ENCODE measurements at regions of chr1 and their contacts with region 1.

Region 1: GRCh38 chr1:95233737-95234500 is at the start of gene RWDD3:
- DNase-seq: peak; percentile 92 to 97 (median 95)
- ATAC-seq: peak; percentile 92 to 97 (median 92)
- H3K4me3 ChIP-seq: peak within 1 kb of the TSS; percentile 90 to 97 (median 94)
- H3K27ac ChIP-seq: peak within 1 kb of the TSS; percentile 73 to 92 (median 90)
- H3K4me1 ChIP-seq: peaks cover 14 to 49% (median 30%) of the 10 kb centered on the region in 3 donors
- H3K27me3 ChIP-seq: no peaks in the 10 kb centered on the region
- CTCF ChIP-seq: peak; percentile 83 to 94 (median 91)
- total RNA-seq, gene RWDD3: 5.0 to 13.5 (median 9.8) TPM

Region 2: DNA sequence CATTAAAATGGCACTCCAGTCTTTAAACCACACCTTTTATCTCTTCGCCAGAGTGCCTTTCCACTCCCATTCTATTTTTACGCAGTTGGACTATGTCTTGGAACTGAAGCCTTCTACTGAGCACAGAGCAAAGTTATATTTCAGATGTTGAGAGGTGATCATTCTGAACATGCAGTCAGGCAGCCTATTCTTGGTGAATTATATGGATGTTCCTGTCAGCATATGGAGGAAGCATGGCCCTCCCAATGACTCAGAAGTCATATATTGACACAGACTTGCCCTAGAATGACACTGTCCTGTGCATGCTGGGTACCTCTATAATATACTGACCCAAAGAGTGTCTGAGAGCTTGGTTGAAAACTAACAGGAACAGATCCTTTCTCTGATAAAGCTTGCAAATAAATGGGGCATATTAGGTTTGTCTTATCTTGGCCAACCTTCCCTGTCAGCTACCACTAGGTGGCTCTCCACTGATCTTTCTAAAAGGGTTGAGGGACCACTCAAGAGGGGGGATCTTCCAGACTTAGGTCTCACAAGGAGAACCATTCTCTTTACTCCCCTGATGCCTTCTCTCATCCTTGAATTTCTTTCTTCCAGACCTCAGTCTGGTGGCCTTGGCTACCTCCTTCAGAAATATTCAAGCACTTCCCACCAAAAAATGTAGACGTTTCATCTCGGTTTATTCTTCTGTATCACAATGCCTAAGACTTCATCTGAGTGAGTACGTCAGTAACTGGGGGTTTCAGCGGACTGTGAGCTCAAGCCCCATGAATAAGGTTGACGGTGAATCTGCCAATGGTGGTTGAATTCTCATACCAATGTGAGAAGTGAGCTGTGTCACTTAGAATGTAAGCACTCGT is 149.4 kb before region 1 on chr1:
- intact Hi-C with region 1: loop called in 1 of 3 experiments (anchors 10 kb)
- DNase-seq: no peak
- ATAC-seq: peak; percentile 38 to 80 (median 59)
- H3K4me3 ChIP-seq: no peak overlapping the region
- H3K27ac ChIP-seq: no peak overlapping the region
- H3K4me1 ChIP-seq: peaks cover 0 to 4% (median 0%) of the 10 kb centered on the region in 3 donors
- H3K27me3 ChIP-seq: no peaks in the 10 kb centered on the region
- CTCF ChIP-seq: peak; percentile 17 to 40 (median 26)

Region 3: DNA sequence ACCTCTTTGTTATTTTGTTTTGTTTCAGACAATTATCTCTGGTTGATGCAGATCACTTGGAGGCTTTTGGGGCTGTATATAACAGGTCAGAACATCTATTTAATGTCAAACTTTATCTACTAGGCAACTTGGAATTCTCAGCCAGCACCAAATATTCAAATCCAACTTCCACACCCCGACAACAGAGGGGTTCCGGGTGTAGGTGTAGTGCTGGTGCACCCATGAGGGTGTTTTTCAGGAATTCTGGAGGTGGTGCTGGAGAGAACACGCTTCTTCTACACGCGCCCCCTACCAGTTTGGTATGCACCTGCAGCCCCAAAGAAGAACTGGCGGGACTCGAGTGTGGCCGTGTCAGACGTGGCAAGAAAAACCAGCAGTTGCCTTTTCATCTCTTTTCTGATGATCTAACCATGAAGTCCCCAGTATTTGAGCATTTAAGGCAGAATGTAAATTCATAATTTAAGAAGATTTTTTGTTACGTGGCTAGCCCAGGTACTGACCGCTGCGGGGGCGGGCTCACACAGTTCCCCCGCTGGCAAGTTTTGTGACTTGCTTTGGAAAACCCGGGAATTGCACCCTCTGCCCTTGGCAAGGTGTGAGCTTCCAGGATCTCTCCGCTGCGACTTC is 117.2 kb before region 1 on chr1:
- intact Hi-C with region 1: loop called in 2 of 3 experiments (anchors 5 to 10 kb)
- DNase-seq: peak; percentile 72 to 82 (median 78)
- ATAC-seq: peak; percentile 82 to 92 (median 86)
- H3K4me3 ChIP-seq: peak overlapping the region; percentile 70 to 90 (median 83)
- H3K27ac ChIP-seq: peak overlapping the region; percentile 84 to 92 (median 86)
- H3K4me1 ChIP-seq: peaks cover 0 to 8% (median 8%) of the 10 kb centered on the region in 3 donors
- H3K27me3 ChIP-seq: no peaks in the 10 kb centered on the region
- CTCF ChIP-seq: peak; percentile 38 to 60 (median 52)

Region 4: GRCh38 chr1:95278173-95279006 is 44.5 kb after region 1 on chr1:
- intact Hi-C with region 1: no loop called
- DNase-seq: no peak
- ATAC-seq: no peak
- H3K4me3 ChIP-seq: no peak overlapping the region
- H3K27ac ChIP-seq: no peak overlapping the region
- H3K4me1 ChIP-seq: no peaks in the 10 kb centered on the region
- H3K27me3 ChIP-seq: no peaks in the 10 kb centered on the region
- CTCF ChIP-seq: no peak

Measured in pancreas (tissue), 10 donors.